Gastrocnemius medialis (tissue), 4 donors: ENCODE measurements at regions of chr2 and their contacts with region 1.

Region 1: DNA sequence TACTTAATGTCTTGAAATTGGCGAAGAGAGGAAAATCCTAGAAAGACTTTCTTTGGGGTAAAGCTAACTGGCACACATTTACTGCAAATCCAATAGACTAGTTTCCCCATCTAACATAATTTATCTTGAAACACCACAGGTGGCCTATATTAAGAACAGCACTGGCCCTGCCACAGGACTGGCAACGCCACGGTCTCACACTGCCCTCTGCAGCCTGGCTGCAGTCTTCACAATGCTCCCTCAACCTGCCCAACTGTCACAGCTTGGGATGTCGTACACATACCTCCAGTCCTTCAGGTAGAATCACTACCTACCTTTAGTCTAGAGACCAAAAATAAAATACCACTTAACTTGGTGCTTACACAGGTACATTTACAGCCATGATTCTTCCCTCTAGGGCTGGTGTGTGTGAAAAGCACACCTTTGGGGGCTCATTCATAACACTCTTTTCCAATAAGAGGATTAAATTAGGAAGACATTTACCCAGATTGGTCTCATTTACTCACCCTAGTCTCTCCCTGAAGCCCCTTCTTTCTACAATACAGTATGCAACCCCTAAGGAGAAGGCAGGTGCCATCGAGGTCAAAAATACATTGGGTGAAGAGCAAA is 222.2 kb downstream of the C1D start:
- DNase-seq: peak; percentile 30 to 35
- ATAC-seq: peak; percentile 79 to 85
- H3K4me3 ChIP-seq: no peak overlapping the region
- H3K27ac ChIP-seq: no peak overlapping the region
- H3K4me1 ChIP-seq: peaks cover 0 to under 1% of the 10 kb centered on the region in 2 donors
- H3K27me3 ChIP-seq: no peaks in the 10 kb centered on the region
- CTCF ChIP-seq: peak; percentile 61 to 80 (median 69)
- POLR2A ChIP-seq: no peak

Region 2: DNA sequence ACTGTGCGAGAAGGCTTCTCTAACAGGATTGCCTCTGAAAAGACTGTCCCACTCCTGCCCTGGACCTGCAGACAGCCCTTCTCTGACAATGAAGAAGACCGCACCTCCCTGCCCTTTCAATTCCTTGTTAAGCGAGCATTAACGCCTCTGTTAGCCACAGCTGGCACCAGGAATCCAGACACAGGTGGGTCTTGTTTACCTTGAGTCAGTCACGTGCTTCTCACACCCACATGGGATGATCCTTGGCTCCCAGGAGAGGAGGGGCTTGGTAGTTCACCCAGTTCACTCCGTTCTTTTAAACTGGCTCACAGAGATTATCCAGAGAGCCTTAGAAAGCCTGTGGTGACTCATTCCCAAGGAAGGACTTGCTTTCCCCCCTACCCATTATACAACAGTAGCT is 1816.2 kb before region 1 on chr2:
- in situ Hi-C with region 1: no loop called
- intact Hi-C with region 1: loop called (anchors 10 kb)
- DNase-seq: no peak
- ATAC-seq: no peak
- H3K4me3 ChIP-seq: no peak overlapping the region
- H3K27ac ChIP-seq: no peak overlapping the region
- H3K4me1 ChIP-seq: peaks cover 8 to 15% of the 10 kb centered on the region in 2 donors
- H3K27me3 ChIP-seq: no peaks in the 10 kb centered on the region
- CTCF ChIP-seq: no peak
- POLR2A ChIP-seq: no peak

Region 3: DNA sequence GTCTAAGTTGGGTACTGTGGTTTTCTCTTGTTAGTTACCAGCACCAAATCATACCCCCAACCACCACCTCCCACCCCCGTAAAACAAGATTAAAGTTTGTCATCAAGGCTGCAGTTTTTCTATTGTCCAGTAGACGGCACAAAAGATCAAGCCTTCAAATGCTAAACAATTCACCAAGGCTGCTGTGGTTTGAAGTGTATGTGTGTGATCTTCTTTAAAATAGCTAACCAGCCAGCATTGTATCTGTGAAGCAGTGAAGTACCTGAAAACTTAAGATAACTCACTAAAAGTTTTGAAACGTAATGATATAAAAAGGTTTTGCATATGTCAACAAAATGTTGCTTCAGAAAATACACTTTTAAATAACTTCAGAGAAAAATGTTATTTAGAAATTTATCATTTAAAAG is 1411.5 kb before region 1 on chr2:
- in situ Hi-C with region 1: loop called (anchors 5 to 10 kb)
- intact Hi-C with region 1: loop called (anchors 1 kb)
- DNase-seq: no peak
- ATAC-seq: peak in 1 of 2 donors; percentile 22
- H3K4me3 ChIP-seq: no peak overlapping the region
- H3K27ac ChIP-seq: no peak overlapping the region
- H3K4me1 ChIP-seq: peaks cover 0 to 13% of the 10 kb centered on the region in 2 donors
- H3K27me3 ChIP-seq: peaks cover 25 to 44% (median 33%) of the 10 kb centered on the region in 3 donors
- CTCF ChIP-seq: peak; percentile 62 to 86 (median 77)
- POLR2A ChIP-seq: no peak

Region 4: GRCh38 chr2:66574701-66575624 is 1265.6 kb before region 1 on chr2:
- in situ Hi-C with region 1: loop called in 1 of 4 experiments (anchors 25 kb)
- intact Hi-C with region 1: loop called (anchors 10 kb)
- DNase-seq: peak in 1 of 2 donors; percentile 17
- ATAC-seq: peak in 1 of 2 donors; percentile 43
- H3K4me3 ChIP-seq: peak overlapping the region; percentile 38 to 67 (median 50)
- H3K27ac ChIP-seq: no peak overlapping the region
- H3K4me1 ChIP-seq: peaks cover 19 to 30% of the 10 kb centered on the region in 2 donors
- H3K27me3 ChIP-seq: peaks cover 71 to 78% (median 75%) of the 10 kb centered on the region in 3 donors
- CTCF ChIP-seq: no peak
- POLR2A ChIP-seq: no peak

Region 5: DNA sequence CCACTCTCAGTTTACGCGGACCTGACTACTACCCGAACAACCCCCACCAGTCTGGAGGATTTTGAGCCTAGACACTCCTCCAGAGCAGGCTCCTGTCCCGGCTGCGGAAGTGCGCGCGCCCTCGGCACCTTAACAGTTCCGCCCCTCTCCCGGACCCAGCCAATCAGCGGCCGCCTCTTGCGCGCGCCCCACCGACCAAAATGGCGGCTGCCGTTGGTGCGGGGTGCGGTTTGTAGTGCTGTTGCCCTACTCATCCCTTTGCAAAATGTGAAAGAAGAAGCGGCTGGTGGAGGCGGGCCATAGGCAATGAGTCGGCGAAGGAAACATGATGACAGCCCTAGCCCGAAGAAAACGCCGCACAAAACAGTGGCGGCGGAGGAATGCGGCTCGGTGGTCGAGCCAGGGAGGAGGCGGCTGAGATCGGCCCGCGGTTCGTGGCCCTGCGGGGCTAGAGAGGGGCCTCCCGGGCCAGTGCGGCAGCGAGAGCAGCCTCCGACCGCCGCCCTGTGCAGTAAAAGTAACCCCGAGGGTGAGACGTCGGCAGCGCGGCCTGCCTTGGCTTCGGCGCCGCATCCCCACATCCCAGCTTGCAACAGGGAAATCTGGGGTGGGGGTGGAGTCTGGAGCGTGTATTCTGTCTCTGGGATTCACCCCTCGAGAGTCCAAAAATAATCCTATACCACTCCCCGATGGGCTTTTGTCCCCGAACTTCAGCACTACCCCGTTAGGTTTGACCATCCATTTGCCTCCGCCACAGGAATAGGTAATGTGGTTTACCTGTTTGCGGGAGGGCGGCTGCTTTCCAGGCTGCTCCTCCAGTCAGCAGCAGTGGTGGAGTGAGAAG is 443.2 kb before region 1 on chr2 and contains the start of gene ETAA1:
- in situ Hi-C with region 1: no loop called
- intact Hi-C with region 1: loop called (anchors 5 kb)
- DNase-seq: peak; percentile 85 to 88
- ATAC-seq: peak; percentile 98
- H3K4me3 ChIP-seq: peak within 1 kb of the TSS; percentile 83 to 95 (median 89)
- H3K27ac ChIP-seq: peak within 1 kb of the TSS; percentile 82 to 90 (median 90)
- H3K4me1 ChIP-seq: no peaks in the 10 kb centered on the region
- H3K27me3 ChIP-seq: no peaks in the 10 kb centered on the region
- CTCF ChIP-seq: no peak
- POLR2A ChIP-seq: peak; percentile 61 to 65
- total RNA-seq, gene ETAA1: 4.1 to 7.8 (median 4.9) TPM

Region 6: GRCh38 chr2:67463810-67464209 is 376.8 kb before region 1 on chr2:
- in situ Hi-C with region 1: no loop called
- intact Hi-C with region 1: loop called (anchors 10 kb)
- DNase-seq: peak; percentile 15 to 41
- ATAC-seq: peak; percentile 97
- H3K4me3 ChIP-seq: no peak overlapping the region
- H3K27ac ChIP-seq: peak overlapping the region in 2 of 4 donors; percentile 46 to 67
- H3K4me1 ChIP-seq: peaks cover 5 to 11% of the 10 kb centered on the region in 2 donors
- H3K27me3 ChIP-seq: no peaks in the 10 kb centered on the region
- CTCF ChIP-seq: no peak
- POLR2A ChIP-seq: peak in 1 of 2 donors; percentile 16

Region 7: DNA sequence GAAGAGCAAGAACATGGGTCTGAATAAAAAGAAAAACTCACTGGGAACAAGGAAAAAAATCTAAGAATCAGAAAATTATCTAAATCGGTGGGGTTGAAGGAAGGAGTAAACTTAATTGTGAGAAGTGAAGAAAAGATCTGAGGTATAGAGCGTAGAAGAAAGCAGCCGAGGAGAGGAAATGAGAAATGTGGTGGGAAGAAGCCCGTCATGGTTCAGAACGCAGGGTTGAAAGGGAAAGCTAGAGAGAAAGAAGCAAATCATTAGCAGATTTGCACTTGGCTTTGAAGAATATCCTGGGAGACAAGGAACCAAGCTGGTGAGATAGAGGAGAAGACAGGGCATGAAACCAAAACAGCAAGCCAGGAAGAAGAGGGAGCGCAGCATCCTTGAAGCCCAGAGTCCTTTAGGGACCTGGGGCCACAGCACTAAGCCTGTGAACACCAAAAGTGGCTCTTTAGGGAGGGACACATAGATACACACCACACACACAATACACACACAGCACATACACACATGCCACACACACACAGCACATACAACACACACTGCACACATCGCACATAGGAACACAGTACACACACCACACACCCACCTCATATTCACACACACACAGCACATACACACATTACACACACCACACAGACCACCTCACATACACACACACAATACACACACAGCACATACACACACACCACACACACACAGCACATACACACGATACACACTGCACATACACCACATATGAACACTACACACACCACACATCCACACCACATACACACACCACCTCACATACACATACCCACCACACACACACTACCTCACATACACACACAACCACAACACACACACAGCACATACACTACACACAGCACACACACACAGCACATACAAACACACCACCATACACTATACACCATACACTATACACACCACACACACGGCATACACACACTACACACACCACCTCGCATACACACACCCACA is 168.8 kb before region 1 on chr2:
- in situ Hi-C with region 1: no loop called
- intact Hi-C with region 1: loop called (anchors 10 kb)
- DNase-seq: no peak
- ATAC-seq: no peak
- H3K4me3 ChIP-seq: no peak overlapping the region
- H3K27ac ChIP-seq: peak overlapping the region; percentile 24 to 80 (median 66)
- H3K4me1 ChIP-seq: peaks cover 33 to 58% of the 10 kb centered on the region in 2 donors
- H3K27me3 ChIP-seq: no peaks in the 10 kb centered on the region
- CTCF ChIP-seq: no peak
- POLR2A ChIP-seq: no peak